Mammary epithelial cell (primary cell): ENCODE measurements at regions of chr14 and their contacts with region 1.

Region 1: GRCh38 chr14:59407246-59408010 is 57.8 kb downstream of the GPR135 start:
- DNase-seq: peak; percentile 86
- H3K4me3 ChIP-seq: peak overlapping the region in 2 of 3 experiments; percentile 14 to 30
- H3K27ac ChIP-seq: peak overlapping the region; percentile 99
- H3K4me1 ChIP-seq: peaks cover 18% of the 10 kb centered on the region
- H3K27me3 ChIP-seq: no peaks in the 10 kb centered on the region
- CTCF ChIP-seq: no peak

Region 2: GRCh38 chr14:58844544-58844943 is 562.9 kb before region 1 on chr14:
- CTCF ChIA-PET with region 1: no interaction called
- dilution Hi-C with region 1: no loop called
- in situ Hi-C with region 1: no loop called
- intact Hi-C with region 1: no loop called
- DNase-seq: no peak
- H3K4me3 ChIP-seq: no peak overlapping the region
- H3K27ac ChIP-seq: no peak overlapping the region
- H3K4me1 ChIP-seq: no peaks in the 10 kb centered on the region
- H3K27me3 ChIP-seq: no peaks in the 10 kb centered on the region
- CTCF ChIP-seq: no peak

Region 3: GRCh38 chr14:59281613-59282377 is 125.6 kb before region 1 on chr14:
- CTCF ChIA-PET with region 1: no interaction called
- dilution Hi-C with region 1: no loop called
- in situ Hi-C with region 1: no loop called
- intact Hi-C with region 1: loop called (anchors 1 kb)
- DNase-seq: peak; percentile 83
- H3K4me3 ChIP-seq: no peak overlapping the region
- H3K27ac ChIP-seq: peak overlapping the region; percentile 95
- H3K4me1 ChIP-seq: peaks cover 56% of the 10 kb centered on the region
- H3K27me3 ChIP-seq: no peaks in the 10 kb centered on the region
- CTCF ChIP-seq: no peak

Region 4: GRCh38 chr14:59483900-59484638 is 76.6 kb after region 1 on chr14 and contains the starts of genes JKAMP and L3HYPDH:
- CTCF ChIA-PET with region 1: no interaction called
- dilution Hi-C with region 1: no loop called
- in situ Hi-C with region 1: no loop called
- intact Hi-C with region 1: no loop called
- DNase-seq: peak; percentile 92
- H3K4me3 ChIP-seq: peak within 1 kb of the TSS; percentile 78 to 96 (median 93)
- H3K27ac ChIP-seq: peak within 1 kb of the TSS; percentile 77
- H3K4me1 ChIP-seq: peaks cover 32% of the 10 kb centered on the region
- H3K27me3 ChIP-seq: no peaks in the 10 kb centered on the region
- CTCF ChIP-seq: peak in 1 of 2 donors; percentile 54
- total RNA-seq, gene JKAMP: 36.6 to 99.9 TPM
- total RNA-seq, gene L3HYPDH: 23.4 to 30.2 TPM

Region 5: DNA sequence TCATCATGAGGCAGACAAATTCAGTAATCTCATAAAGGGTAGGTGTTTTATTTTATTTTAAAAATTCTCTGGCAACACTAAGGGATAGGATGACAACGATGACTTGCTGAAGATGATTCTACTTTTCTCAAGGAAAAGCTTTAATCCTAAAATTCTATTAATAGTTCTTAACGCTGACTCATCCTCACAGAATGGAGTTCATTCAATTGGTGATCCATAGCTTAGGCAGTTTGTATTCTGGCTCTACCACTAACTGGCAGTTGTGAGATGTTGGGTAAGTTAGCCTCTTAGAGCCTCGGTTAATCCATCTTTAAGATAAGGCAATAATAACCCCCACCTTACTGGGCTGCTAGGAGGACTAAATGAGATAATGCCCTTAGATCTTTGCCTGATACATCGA is 346.8 kb after region 1 on chr14:
- CTCF ChIA-PET with region 1: no interaction called
- dilution Hi-C with region 1: no loop called
- in situ Hi-C with region 1: no loop called
- intact Hi-C with region 1: no loop called
- DNase-seq: no peak
- H3K4me3 ChIP-seq: no peak overlapping the region
- H3K27ac ChIP-seq: no peak overlapping the region
- H3K4me1 ChIP-seq: no peaks in the 10 kb centered on the region
- H3K27me3 ChIP-seq: no peaks in the 10 kb centered on the region
- CTCF ChIP-seq: no peak

Region 6: GRCh38 chr14:61034416-61035120 is 1627.1 kb after region 1 on chr14:
- CTCF ChIA-PET with region 1: interaction called, 11 read pairs
- dilution Hi-C with region 1: no loop called
- in situ Hi-C with region 1: no loop called
- intact Hi-C with region 1: no loop called
- DNase-seq: peak; percentile 34
- H3K4me3 ChIP-seq: no peak overlapping the region
- H3K27ac ChIP-seq: no peak overlapping the region
- H3K4me1 ChIP-seq: peaks cover 4% of the 10 kb centered on the region
- H3K27me3 ChIP-seq: no peaks in the 10 kb centered on the region
- CTCF ChIP-seq: no peak